ENCODE measurements at regions of chr19 and their contacts with region 1.

Region 1: GRCh38 chr19:33235269-33235995 is 9.8 kb upstream of the SLC7A10 start:
- H3K4me3 ChIP-seq: no peak overlapping the region
- H3K27ac ChIP-seq: no peak overlapping the region
- H3K4me1 ChIP-seq: peaks cover 2% of the 10 kb centered on the region; the same call in 1 of the 2 replicates
- CTCF ChIP-seq: peak; percentile 88

Region 2: DNA sequence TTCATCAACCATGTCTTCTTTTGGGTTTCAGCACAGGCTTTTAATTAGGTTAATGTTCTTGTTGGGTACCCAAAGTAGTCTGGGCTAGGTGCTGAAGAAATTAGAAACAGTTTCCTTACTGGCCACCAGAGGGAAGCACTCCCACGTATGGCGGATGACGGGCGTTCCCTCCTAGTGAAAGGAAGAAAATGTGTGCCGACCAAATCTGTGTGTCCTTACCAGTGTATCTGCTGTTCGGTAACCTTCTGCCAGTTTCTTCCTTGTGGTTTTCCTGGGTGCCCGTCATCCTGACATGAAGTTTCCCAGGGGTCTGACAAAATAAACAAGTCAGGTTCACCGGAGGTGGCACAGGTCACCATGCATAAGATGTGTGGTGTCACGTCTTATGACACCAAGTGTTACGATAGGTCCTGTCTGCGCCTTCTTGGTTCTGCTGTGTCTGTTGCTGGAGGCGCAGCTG is 109.5 kb before region 1 on chr19:
- CTCF ChIA-PET with region 1: interaction called, 21 read pairs
- POLR2A ChIA-PET with region 1: no interaction called
- H3K4me3 ChIP-seq: no peak overlapping the region
- H3K27ac ChIP-seq: 0 out of 2 replicates have a peak overlapping the region, but pooled peaks have one; percentile 11
- H3K4me1 ChIP-seq: peaks cover 4% of the 10 kb centered on the region
- CTCF ChIP-seq: peak; percentile 86

Region 3: DNA sequence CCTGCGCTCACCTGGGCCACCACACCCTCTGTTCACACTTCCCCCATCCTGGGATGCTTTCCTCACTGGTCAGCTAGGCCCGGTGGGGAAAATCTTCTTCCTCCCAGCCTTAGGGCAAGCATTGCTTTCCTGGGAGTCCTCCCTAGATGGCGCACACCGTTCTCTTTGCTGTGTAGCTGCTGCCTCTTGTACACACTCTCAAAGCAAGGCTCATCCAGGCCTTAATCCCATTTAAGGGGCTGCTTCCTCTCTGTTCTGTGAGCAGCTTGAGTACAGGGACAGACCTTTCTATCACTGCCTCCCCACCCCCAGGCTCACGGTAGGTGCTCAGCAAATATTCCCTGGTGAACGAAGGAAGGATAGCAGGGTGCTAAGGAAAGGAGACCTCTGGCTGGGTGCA is 20.8 kb before region 1 on chr19:
- CTCF ChIA-PET with region 1: interaction called, 13 read pairs
- POLR2A ChIA-PET with region 1: no interaction called
- H3K4me3 ChIP-seq: no peak overlapping the region
- H3K27ac ChIP-seq: peak overlapping the region; percentile 31; the same call in 1 of the 2 replicates
- H3K4me1 ChIP-seq: peaks cover 2% of the 10 kb centered on the region; the same call in 1 of the 2 replicates
- CTCF ChIP-seq: peak; percentile 82

Region 4: GRCh38 chr19:33302175-33302973 is 66.9 kb after region 1 on chr19 and contains the start of gene CEBPA:
- CTCF ChIA-PET with region 1: interaction called, 28 read pairs
- POLR2A ChIA-PET with region 1: interaction called, 3 read pairs
- H3K4me3 ChIP-seq: peak within 1 kb of the TSS; percentile 48
- H3K27ac ChIP-seq: peak within 1 kb of the TSS; percentile 98
- H3K4me1 ChIP-seq: peaks cover 68% of the 10 kb centered on the region
- CTCF ChIP-seq: peak; percentile 63; the same call in 1 of the 2 replicates

Region 5: DNA sequence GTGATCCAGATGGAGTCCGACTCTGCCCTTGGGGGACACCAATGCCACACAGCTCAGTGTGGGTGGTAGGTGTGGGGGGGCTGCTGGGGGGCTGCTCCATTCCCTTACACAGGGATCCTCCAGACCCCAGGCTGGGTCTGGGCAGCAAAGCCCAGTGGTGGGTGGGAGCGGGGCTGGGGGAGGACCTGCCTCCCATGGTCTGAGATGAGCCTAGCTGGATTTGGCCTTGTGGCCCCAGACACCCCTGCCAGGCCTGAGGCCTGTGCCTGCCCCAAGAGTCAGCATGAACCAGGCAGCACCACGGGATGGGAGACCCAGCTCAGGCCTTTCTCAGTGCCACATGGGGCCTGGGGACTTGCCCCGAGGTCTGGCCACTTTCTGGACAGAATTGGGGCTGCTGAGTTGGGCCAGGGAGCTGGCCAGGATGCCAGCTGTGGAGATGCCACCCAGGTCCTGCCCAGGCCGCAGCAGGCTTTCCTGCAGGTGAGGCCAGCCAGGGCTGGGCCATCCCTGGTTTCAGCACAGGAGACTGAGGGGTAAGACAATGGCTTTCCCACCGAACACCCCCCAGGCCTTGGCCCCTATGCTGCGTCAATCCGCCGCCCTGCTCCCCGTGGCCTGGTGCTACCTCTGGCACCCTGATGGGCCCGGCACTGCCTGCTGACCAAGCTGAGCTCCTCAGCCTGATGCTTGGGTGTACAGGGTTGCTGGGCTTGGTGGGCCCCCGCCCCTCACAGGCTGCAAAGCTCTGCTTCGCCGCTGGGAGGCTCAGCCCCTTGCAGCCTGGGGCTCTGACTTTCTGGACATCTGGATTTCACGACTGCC is 162.3 kb after region 1 on chr19:
- CTCF ChIA-PET with region 1: interaction called, 38 read pairs
- POLR2A ChIA-PET with region 1: interaction called, 3 read pairs
- H3K4me3 ChIP-seq: no peak overlapping the region
- H3K27ac ChIP-seq: no peak overlapping the region
- H3K4me1 ChIP-seq: no peaks in the 10 kb centered on the region
- CTCF ChIP-seq: peak; percentile 86

Region 6: GRCh38 chr19:33771384-33772101 is 536.1 kb after region 1 on chr19:
- CTCF ChIA-PET with region 1: interaction called, 34 read pairs
- POLR2A ChIA-PET with region 1: no interaction called
- H3K4me3 ChIP-seq: no peak overlapping the region
- H3K27ac ChIP-seq: no peak overlapping the region
- H3K4me1 ChIP-seq: no peaks in the 10 kb centered on the region
- CTCF ChIP-seq: peak; percentile 99

Measured in HEK293 (cell line).